ENCODE measurements at regions of chr2 and their contacts with region 1.

Region 1: GRCh38 chr2:206249714-206250591 is 24.5 kb upstream of the ZDBF2 start:
- DNase-seq: peak; percentile 30
- ATAC-seq: peak; percentile 60
- H3K4me3 Mint-ChIP-seq: peak overlapping the region; percentile 69
- H3K27ac Mint-ChIP-seq: no peak overlapping the region
- H3K4me1 Mint-ChIP-seq: peaks cover 5% of the 10 kb centered on the region
- H3K27me3 Mint-ChIP-seq: peaks cover 40% of the 10 kb centered on the region

Region 2: GRCh38 chr2:206095536-206096332 is 154.2 kb before region 1 on chr2:
- CTCF ChIA-PET with region 1: no interaction called
- POLR2A ChIA-PET with region 1: no interaction called
- intact Hi-C with region 1: no loop called
- DNase-seq: no peak
- ATAC-seq: no peak
- H3K4me3 Mint-ChIP-seq: no peak overlapping the region
- H3K27ac Mint-ChIP-seq: no peak overlapping the region
- H3K4me1 Mint-ChIP-seq: peaks cover 6% of the 10 kb centered on the region
- H3K27me3 Mint-ChIP-seq: no peaks in the 10 kb centered on the region

Region 3: DNA sequence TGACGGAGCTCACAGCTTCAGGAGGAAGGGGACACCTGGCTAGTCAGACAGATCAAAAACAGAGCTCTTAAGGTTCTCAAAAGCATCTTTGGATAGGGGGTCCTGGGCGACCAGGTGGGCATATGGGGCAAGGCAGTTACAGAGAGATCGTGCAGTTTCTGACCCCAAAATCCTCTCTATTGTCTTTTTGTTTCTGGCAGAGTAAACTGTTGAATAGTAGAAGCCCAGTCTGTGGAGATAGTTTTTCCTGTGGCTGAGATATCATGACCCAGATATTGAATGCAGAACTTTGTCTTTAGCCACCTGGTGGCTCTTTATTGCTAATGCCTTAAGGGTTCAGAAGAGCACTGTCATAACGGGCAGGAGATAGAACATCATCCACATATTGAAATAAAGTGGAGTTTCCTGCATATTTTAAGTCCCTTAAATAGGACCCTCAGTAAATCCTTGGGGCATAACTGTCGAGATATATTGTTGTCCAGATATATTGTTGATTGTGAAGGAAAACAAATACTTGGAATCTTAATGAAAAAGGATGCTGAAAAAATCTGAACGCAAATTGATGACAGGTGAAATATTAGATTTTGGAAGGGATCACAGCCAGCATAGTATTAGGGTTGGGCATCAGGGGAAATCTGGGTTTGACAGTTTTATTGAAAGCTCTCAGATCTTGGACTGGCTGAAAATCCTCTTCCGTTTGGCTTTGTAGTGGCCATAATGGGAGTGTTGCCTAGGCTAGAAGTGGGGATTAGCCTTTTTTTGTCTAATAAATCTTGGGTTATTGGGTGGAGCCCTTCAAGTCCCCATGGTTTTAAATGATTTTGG is 10.4 kb after region 1 on chr2:
- CTCF ChIA-PET with region 1: interaction called, 3 read pairs
- POLR2A ChIA-PET with region 1: no interaction called
- intact Hi-C with region 1: loop called in 1 of 2 experiments (anchors 2 kb)
- DNase-seq: no peak
- ATAC-seq: peak; percentile 78
- H3K4me3 Mint-ChIP-seq: no peak overlapping the region
- H3K27ac Mint-ChIP-seq: no peak overlapping the region
- H3K4me1 Mint-ChIP-seq: peaks cover 3% of the 10 kb centered on the region
- H3K27me3 Mint-ChIP-seq: peaks cover 57% of the 10 kb centered on the region